Left cardiac atrium (tissue), 4 donors: ENCODE measurements at regions of chr12 and their contacts with region 1.

Region 1: DNA sequence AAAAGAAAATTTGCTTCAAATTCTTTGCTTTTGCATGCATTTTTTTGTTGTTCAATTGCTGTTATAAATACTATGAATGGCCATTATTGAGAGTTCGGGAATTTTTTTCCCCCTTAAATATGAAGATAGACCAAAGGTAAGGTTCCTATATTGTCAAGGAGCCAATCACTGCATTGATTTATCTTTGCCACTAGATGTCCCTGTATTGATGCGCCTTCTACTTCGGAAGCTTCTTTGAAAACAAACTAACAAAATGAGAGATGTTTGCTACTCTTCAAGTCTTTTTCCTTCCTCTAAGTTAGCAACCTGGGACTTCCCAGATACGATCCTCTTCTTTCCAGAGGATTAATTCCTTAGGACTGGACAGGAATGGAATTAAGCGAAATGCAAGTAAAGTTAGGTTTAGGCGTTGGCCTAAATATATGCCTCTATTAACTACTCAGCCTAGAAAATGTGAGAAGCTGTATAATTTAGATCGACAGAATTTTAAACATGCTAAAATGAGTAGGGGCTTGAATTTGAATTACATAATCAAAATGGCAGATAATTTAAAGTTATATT is 318.1 kb downstream of the AEBP2 start:
- DNase-seq: no peak
- ATAC-seq: peak; percentile 32 to 65

Region 2: DNA sequence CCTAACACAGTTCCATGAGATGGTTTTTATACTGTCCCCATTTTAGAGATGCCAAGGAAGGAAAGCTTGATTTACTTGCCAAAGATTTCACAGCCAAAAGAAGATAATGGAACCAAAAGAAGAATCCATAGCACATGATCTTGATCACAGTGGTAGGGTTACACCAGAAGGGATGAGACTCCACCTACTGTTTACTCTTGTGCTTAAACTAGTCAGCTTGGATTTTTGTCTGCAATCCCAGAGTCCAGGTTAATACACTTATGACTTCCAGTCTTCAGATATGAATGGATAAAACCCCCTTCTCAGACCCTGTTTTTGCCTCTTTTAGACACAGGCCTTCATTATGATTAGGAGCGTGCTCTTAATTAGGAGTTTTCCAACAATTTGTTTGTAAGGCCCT is 136.1 kb after region 1 on chr12:
- intact Hi-C with region 1: loop called in 1 of 2 experiments (anchors 5 kb)
- DNase-seq: no peak
- ATAC-seq: peak; percentile 70 to 71

Region 3: GRCh38 chr12:20624718-20625117 is 867.3 kb after region 1 on chr12:
- intact Hi-C with region 1: loop called in 1 of 2 experiments (anchors 10 kb)
- DNase-seq: no peak
- ATAC-seq: peak in 1 of 2 donors; percentile 19